Gastrocnemius medialis (tissue), 4 donors: ENCODE measurements at regions of chr1 and their contacts with region 1.

Region 1: GRCh38 chr1:116457946-116458604 is 85.0 kb downstream of the ATP1A1 start:
- DNase-seq: peak; percentile 50 to 67
- ATAC-seq: peak; percentile 53 to 85
- H3K4me3 ChIP-seq: no peak overlapping the region
- H3K27ac ChIP-seq: peak overlapping the region; percentile 54 to 76 (median 63)
- H3K4me1 ChIP-seq: peaks cover 0 to 6% of the 10 kb centered on the region in 2 donors
- H3K27me3 ChIP-seq: no peaks in the 10 kb centered on the region
- CTCF ChIP-seq: no peak
- POLR2A ChIP-seq: no peak

Region 2: DNA sequence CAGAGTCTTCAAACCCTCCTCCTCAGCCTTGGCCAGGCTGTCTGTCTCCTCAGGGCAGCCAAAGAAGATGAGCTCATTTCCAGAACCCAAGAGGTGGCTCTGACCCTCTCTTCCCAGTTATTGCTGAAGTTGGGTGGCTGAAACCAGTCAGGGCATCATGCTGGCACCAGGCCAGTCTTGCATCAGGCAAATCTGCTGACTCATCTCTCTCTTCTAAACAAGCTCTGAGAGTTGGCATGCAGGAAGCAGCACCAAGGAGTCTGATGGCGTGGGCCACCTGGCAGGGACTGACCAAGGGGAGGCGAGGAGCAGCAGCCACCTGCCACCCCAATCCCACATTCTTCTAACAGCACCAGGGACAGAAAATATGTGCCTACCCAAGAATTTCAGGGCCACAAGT is 189.9 kb before region 1 on chr1:
- in situ Hi-C with region 1: no loop called
- intact Hi-C with region 1: no loop called
- DNase-seq: peak in 1 of 2 donors; percentile 41
- ATAC-seq: no peak
- H3K4me3 ChIP-seq: no peak overlapping the region
- H3K27ac ChIP-seq: no peak overlapping the region
- H3K4me1 ChIP-seq: peaks cover 0 to 1% of the 10 kb centered on the region in 2 donors
- H3K27me3 ChIP-seq: no peaks in the 10 kb centered on the region
- CTCF ChIP-seq: no peak
- POLR2A ChIP-seq: no peak

Region 3: GRCh38 chr1:116439701-116440100 is 18.4 kb before region 1 on chr1:
- in situ Hi-C with region 1: no loop called
- intact Hi-C with region 1: loop called (anchors 2 kb)
- DNase-seq: no peak
- ATAC-seq: no peak
- H3K4me3 ChIP-seq: no peak overlapping the region
- H3K27ac ChIP-seq: no peak overlapping the region
- H3K4me1 ChIP-seq: no peaks in the 10 kb centered on the region
- H3K27me3 ChIP-seq: no peaks in the 10 kb centered on the region
- CTCF ChIP-seq: no peak
- POLR2A ChIP-seq: no peak

Region 4: GRCh38 chr1:116489231-116489697 is 31.2 kb after region 1 on chr1:
- in situ Hi-C with region 1: no loop called
- intact Hi-C with region 1: no loop called
- DNase-seq: no peak
- ATAC-seq: no peak
- H3K4me3 ChIP-seq: no peak overlapping the region
- H3K27ac ChIP-seq: no peak overlapping the region
- H3K4me1 ChIP-seq: peaks cover 4 to 36% of the 10 kb centered on the region in 2 donors
- H3K27me3 ChIP-seq: no peaks in the 10 kb centered on the region
- CTCF ChIP-seq: no peak
- POLR2A ChIP-seq: no peak

Region 5: GRCh38 chr1:116538544-116538943 is 80.5 kb after region 1 on chr1:
- in situ Hi-C with region 1: no loop called
- intact Hi-C with region 1: no loop called
- DNase-seq: no peak
- ATAC-seq: no peak
- H3K4me3 ChIP-seq: no peak overlapping the region
- H3K27ac ChIP-seq: no peak overlapping the region
- H3K4me1 ChIP-seq: no peaks in the 10 kb centered on the region
- H3K27me3 ChIP-seq: no peaks in the 10 kb centered on the region
- CTCF ChIP-seq: no peak
- POLR2A ChIP-seq: no peak